MCF 10A (cell line): ENCODE measurements at regions of chr10 and their contacts with region 1.

Region 1: DNA sequence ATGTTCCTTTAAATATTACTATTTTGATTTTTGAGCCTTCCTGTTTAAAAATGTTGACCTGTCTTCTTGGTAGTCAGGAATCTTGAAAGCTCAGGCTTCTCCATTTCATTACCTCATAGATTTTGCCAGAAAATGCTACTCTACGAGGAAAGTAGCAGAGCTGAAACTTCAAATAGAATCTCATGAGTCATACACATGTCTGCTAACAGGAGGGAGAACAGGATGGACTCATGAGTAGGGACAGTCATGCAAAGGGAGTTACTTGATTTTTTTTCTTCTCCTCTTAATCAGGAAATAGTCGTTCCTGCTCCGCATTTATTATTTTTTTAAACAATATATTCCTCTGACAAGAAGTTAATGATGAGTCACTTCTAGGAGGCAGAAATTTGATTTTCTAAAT is 37.0 kb upstream of the MINDY3 start:
- DNase-seq: peak; percentile 16
- H3K4me3 Mint-ChIP-seq: no peak overlapping the region
- H3K27ac Mint-ChIP-seq: no peak overlapping the region
- H3K4me1 Mint-ChIP-seq: peaks cover 5% of the 10 kb centered on the region
- H3K27me3 Mint-ChIP-seq: peaks cover 52% of the 10 kb centered on the region
- CTCF ChIP-seq: no peak

Region 2: GRCh38 chr10:15879058-15879457 is 18.2 kb before region 1 on chr10:
- CTCF ChIA-PET with region 1: interaction called, 11 read pairs
- POLR2A ChIA-PET with region 1: interaction called, 4 read pairs
- intact Hi-C with region 1: no loop called
- DNase-seq: peak; percentile 47
- H3K4me3 Mint-ChIP-seq: no peak overlapping the region
- H3K27ac Mint-ChIP-seq: no peak overlapping the region
- H3K4me1 Mint-ChIP-seq: no peaks in the 10 kb centered on the region
- H3K27me3 Mint-ChIP-seq: peaks cover 70% of the 10 kb centered on the region
- CTCF ChIP-seq: peak; percentile 58

Region 3: GRCh38 chr10:15884447-15884846 is 12.8 kb before region 1 on chr10:
- CTCF ChIA-PET with region 1: interaction called, 11 read pairs
- POLR2A ChIA-PET with region 1: interaction called, 4 read pairs
- intact Hi-C with region 1: no loop called
- DNase-seq: no peak
- H3K4me3 Mint-ChIP-seq: no peak overlapping the region
- H3K27ac Mint-ChIP-seq: no peak overlapping the region
- H3K4me1 Mint-ChIP-seq: no peaks in the 10 kb centered on the region
- H3K27me3 Mint-ChIP-seq: peaks cover 53% of the 10 kb centered on the region
- CTCF ChIP-seq: no peak

Region 4: DNA sequence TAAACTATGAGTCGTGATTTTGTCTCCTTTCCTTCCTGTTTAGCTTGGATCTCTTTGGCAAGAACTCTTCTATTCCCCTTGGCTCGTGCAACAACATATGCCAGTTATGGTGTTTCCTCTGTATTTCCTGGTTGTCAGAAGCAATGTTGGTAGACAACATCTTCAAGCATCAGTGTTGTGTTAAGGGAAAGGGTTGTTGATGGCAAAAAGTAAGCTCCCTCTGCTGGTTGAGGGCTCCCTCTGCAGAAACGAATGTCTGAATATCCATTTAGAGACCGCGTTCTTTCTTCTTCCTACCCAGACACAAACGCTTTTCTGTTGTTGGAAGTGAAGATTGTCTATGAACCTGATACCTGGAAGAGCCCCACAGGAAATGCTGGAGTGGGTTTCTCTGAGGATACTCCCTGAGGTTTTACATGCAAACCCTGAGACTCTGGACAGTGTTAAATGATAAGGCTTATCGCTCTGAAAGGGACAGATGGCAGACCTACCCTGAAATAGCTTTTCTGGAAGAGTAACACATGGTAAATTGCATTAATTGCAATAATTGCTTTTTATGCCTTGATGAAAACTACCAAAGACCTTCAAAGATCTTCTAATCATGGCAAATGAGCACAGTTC is 647.9 kb after region 1 on chr10:
- CTCF ChIA-PET with region 1: interaction called, 26 read pairs
- POLR2A ChIA-PET with region 1: no interaction called
- intact Hi-C with region 1: loop called (anchors 1 kb)
- DNase-seq: peak; percentile 48
- H3K4me3 Mint-ChIP-seq: no peak overlapping the region
- H3K27ac Mint-ChIP-seq: no peak overlapping the region
- H3K4me1 Mint-ChIP-seq: peaks cover 5% of the 10 kb centered on the region
- H3K27me3 Mint-ChIP-seq: peaks cover 11% of the 10 kb centered on the region
- CTCF ChIP-seq: peak; percentile 40

Region 5: GRCh38 chr10:16809074-16809718 is 911.9 kb after region 1 on chr10:
- CTCF ChIA-PET with region 1: no interaction called
- POLR2A ChIA-PET with region 1: no interaction called
- intact Hi-C with region 1: loop called (anchors 10 kb)
- DNase-seq: peak; percentile 55
- H3K4me3 Mint-ChIP-seq: no peak overlapping the region
- H3K27ac Mint-ChIP-seq: no peak overlapping the region
- H3K4me1 Mint-ChIP-seq: no peaks in the 10 kb centered on the region
- H3K27me3 Mint-ChIP-seq: no peaks in the 10 kb centered on the region
- CTCF ChIP-seq: peak; percentile 49

Region 6: DNA sequence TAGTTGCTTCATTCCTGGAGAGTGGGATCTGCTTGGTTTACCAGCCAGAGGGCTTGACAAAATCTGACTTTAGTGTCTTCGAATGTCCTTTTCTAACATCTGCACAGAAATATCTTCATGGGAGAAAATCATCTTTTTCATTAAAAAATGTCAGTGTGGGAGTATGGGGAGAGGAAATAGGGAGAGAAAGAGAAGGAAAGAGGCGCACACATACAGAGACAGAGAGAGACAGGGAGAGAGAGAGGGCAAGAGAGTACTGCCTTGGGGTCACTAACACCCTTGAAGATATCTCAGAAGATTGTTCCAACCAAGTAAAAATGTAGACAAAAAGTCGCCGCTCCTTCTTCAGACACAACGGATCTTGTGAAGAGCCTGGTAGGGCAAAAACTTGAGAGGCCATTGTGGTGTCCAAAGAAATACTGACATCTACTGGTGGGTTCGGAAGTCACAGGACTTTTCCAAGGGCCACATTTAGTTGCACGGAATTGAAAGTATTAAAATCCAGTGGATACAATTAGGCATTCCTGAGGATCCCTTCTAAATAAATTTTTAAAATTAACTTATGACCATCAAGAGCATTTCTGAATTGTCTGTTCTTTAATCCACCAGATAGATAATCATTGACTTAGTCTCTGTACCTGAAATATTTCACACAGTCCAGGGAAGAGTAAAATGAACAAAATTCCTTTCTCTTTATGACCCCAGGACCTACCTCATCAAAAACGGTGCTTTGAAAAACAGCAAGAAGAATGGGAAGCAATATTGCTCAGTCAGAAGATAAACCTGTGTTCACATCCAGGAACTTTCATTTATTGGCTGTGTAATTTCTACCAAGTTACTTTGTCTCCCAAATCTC is 1360.4 kb after region 1 on chr10:
- CTCF ChIA-PET with region 1: no interaction called
- POLR2A ChIA-PET with region 1: no interaction called
- intact Hi-C with region 1: loop called (anchors 5 kb)
- DNase-seq: peak; percentile 78
- H3K4me3 Mint-ChIP-seq: peak overlapping the region; percentile 56
- H3K27ac Mint-ChIP-seq: no peak overlapping the region
- H3K4me1 Mint-ChIP-seq: peaks cover 6% of the 10 kb centered on the region
- H3K27me3 Mint-ChIP-seq: no peaks in the 10 kb centered on the region
- CTCF ChIP-seq: peak; percentile 68